Dorsolateral prefrontal cortex (tissue), 120 donors: ENCODE measurements at regions of chr9 and their contacts with region 1.

Region 1: DNA sequence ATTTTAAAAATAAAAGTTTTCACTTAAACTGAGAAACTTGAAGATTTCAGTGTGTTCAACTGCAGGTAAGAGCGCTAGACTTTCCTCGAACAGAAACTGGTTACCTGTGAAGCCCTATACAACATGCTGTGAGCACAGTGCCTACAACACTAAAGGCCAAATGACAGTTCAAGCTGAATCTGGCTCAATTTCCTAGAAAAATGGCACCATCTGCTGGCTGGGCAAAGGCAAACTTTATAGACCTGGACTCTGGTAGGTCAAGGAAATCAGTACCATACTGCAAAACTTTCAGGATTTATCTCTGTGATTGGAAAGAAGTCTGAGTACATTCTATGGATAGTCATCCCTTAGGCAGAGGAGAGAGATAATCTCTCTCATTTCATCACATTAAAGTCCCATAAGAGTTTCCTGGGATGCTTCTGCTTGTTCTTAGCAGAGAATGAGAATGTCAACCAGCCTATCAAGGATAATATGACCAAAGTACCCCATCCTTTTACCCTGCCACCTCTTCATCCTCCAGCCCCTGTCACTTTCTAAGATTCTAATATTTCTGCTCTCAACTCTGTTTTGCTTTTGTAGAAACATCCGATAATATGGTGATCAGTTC is 31.8 kb upstream of the FOXB2 start:
- DNase-seq: peak in 5 of 10 donors; percentile 16 to 75 (median 52)
- H3K4me3 ChIP-seq: no peak overlapping the region
- H3K27ac ChIP-seq: peak overlapping the region in 3 of 59 donors; percentile 4 to 19 (median 16)
- H3K27me3 ChIP-seq: peaks cover 0 to 10% (median 0%) of the 10 kb centered on the region in 45 donors
- CTCF ChIP-seq: peak in 55 of 56 donors; percentile 51 to 90 (median 69)

Region 2: GRCh38 chr9:76717613-76718012 is 270.1 kb before region 1 on chr9:
- intact Hi-C with region 1: loop called in 1 of 2 experiments (anchors 10 kb)
- DNase-seq: no peak
- H3K4me3 ChIP-seq: no peak overlapping the region
- H3K27ac ChIP-seq: peak overlapping the region in 34 of 59 donors; percentile 6 to 76 (median 58)
- H3K27me3 ChIP-seq: no peaks in the 10 kb centered on the region
- CTCF ChIP-seq: no peak

Region 3: DNA sequence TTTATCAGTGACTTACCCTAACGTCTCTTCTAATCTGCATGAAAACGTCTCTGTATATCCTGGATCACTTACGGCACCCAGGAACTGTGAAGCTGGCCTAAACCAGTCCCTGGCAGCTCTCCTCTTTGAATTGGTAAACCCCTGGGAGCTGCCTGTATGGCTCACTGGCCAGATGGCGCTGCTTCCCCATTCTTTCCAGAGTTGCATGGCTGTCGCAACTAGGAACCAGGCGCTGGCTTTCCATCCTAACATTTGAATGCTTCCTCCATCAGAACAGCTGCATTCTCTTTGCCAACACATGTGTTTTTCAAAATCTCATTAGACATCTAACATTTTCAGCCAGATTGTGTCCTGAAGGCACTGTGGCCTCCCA is 231.4 kb before region 1 on chr9:
- intact Hi-C with region 1: loop called (anchors 5 to 10 kb)
- DNase-seq: peak in 9 of 10 donors; percentile 35 to 68 (median 54)
- H3K4me3 ChIP-seq: no peak overlapping the region
- H3K27ac ChIP-seq: peak overlapping the region in 11 of 59 donors; percentile 9 to 49 (median 22)
- H3K27me3 ChIP-seq: no peaks in the 10 kb centered on the region
- CTCF ChIP-seq: peak in 52 of 56 donors; percentile 10 to 70 (median 42)

Region 4: DNA sequence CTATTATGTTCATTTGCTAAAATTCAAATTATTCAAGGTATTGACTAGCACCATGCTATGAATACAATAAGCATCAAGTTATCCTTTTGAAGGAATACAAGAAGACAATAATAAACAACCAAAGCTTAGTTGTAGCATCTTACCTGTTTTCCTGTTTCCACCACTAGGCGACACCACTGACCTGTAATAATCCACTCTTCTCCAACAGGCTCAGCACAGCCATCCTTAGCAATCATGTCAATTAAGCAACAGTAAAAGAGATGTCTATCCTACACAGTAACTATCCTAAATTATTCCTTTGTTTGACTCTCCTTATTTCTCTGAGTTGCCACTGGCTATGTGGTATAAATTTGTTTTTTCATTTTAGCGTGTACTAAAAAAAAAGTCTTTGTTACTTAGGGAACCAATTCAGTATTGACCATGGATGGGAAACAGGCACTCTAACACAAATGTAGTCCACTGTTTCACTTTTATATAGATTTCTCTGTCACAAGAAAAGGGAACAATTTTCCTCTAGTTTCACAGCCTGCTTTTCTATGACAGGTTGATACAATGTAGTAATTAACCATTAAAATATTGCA is 177.2 kb before region 1 on chr9:
- intact Hi-C with region 1: loop called (anchors 2 kb)
- DNase-seq: peak in 4 of 10 donors; percentile 34 to 63 (median 47)
- H3K4me3 ChIP-seq: no peak overlapping the region
- H3K27ac ChIP-seq: peak overlapping the region in 41 of 59 donors; percentile 4 to 76 (median 47)
- H3K27me3 ChIP-seq: peaks cover 0 to 6% (median 0%) of the 10 kb centered on the region in 45 donors
- CTCF ChIP-seq: peak; percentile 52 to 96 (median 84)

Region 5: GRCh38 chr9:76898786-76899185 is 88.9 kb before region 1 on chr9:
- intact Hi-C with region 1: loop called in 1 of 2 experiments (anchors 2 kb)
- DNase-seq: no peak
- H3K4me3 ChIP-seq: no peak overlapping the region
- H3K27ac ChIP-seq: peak overlapping the region in 56 of 59 donors; percentile 10 to 99 (median 96)
- H3K27me3 ChIP-seq: peaks cover 0 to 14% (median 0%) of the 10 kb centered on the region in 45 donors
- CTCF ChIP-seq: no peak

Region 6: GRCh38 chr9:76905791-76906650 is 81.7 kb before region 1 on chr9 and contains the start of gene PRUNE2:
- intact Hi-C with region 1: loop called in 1 of 2 experiments (anchors 5 kb)
- DNase-seq: peak; percentile 27 to 84 (median 62)
- H3K4me3 ChIP-seq: peak within 1 kb of the TSS; percentile 41 to 89 (median 69)
- H3K27ac ChIP-seq: peak within 1 kb of the TSS; percentile 20 to 98 (median 86)
- H3K27me3 ChIP-seq: peaks cover 0 to 5% (median 0%) of the 10 kb centered on the region in 45 donors
- CTCF ChIP-seq: peak in 19 of 56 donors; percentile 6 to 33 (median 19)
- total RNA-seq, gene PRUNE2: 85.1 to 471 (median 248) TPM

Region 7: GRCh38 chr9:76949865-76950264 is 37.8 kb before region 1 on chr9:
- intact Hi-C with region 1: loop called in 1 of 2 experiments (anchors 5 kb)
- DNase-seq: no peak
- H3K4me3 ChIP-seq: no peak overlapping the region
- H3K27ac ChIP-seq: no peak overlapping the region
- H3K27me3 ChIP-seq: peaks cover 0 to 14% (median 0%) of the 10 kb centered on the region in 45 donors
- CTCF ChIP-seq: no peak